PC-3 (cell line): ENCODE measurements at regions of chr4 and their contacts with region 1.

Region 1: DNA sequence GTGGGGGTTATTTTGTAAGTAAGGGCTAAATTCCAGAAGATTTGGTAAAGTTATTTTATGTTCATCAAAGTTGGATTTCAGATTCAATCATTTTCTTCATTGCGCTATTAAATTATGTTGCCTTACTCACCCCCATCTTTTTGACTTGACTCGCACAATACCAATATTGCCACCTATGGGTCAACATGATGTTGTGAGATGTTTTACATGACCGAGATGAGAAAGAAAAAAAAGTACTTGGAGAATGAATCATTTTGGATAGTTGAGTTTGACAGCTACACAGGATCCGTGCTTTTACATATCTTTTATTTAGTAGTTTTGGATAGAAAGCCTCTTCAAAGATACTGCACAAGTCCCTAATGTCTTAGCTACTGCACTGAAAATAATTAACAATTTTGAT is 224.2 kb upstream of the EMCN start:
- DNase-seq: peak; percentile 69
- ATAC-seq: no peak
- H3K4me3 ChIP-seq: no peak overlapping the region
- H3K27ac ChIP-seq: no peak overlapping the region
- H3K4me1 ChIP-seq: peaks cover 17% of the 10 kb centered on the region
- H3K27me3 ChIP-seq: no peaks in the 10 kb centered on the region
- CTCF ChIP-seq: peak; percentile 73

Region 2: DNA sequence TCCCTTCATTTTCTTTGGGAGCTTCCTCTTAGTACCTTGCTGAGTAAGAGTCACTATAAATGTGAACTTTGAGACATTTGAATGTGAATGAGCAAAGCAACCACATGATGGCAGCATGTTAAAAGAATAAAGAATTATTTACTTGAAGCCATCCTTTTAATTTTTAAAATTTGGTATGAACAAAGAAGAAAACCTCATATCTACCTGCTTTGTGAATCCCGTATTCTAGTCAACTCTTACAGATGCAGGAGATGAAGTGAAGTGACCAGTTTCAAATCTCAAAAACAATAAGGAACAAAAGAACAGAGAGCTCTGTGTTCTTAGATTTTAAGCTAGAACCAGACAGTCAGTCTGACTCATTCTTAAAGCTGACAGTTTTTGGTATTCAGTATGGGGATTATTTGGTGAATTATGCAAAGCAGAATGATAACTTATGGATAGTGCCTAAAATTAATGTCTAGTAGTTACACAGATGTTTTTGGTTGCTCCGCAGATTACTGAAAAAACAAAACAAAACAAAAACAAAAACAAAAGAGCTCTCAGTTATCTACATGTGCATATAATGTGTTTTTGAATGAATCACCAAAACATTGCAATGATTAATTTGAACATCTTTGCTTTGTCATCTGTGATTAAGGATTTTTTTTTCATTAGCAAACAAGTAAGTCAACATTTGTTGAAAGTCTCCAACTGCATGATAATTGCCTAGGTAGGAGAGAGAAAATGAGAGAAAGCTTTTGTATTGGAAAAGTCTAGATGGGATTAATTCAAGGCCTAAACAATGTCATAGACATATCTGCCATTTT is 743.8 kb before region 1 on chr4:
- CTCF ChIA-PET with region 1: interaction called, 10 read pairs
- POLR2A ChIA-PET with region 1: no interaction called
- intact Hi-C with region 1: no loop called
- DNase-seq: peak; percentile 59
- ATAC-seq: peak; percentile 80
- H3K4me3 ChIP-seq: peak overlapping the region; percentile 20; the same call in 1 of the 2 replicates
- H3K27ac ChIP-seq: peak overlapping the region; percentile 57
- H3K4me1 ChIP-seq: peaks cover 22% of the 10 kb centered on the region
- H3K27me3 ChIP-seq: no peaks in the 10 kb centered on the region
- CTCF ChIP-seq: peak; percentile 74

Region 3: GRCh38 chr4:100093091-100093866 is 648.8 kb before region 1 on chr4:
- CTCF ChIA-PET with region 1: interaction called, 4 read pairs
- POLR2A ChIA-PET with region 1: no interaction called
- intact Hi-C with region 1: loop called (anchors 1 kb)
- DNase-seq: peak; percentile 86
- ATAC-seq: peak; percentile 89
- H3K4me3 ChIP-seq: no peak overlapping the region
- H3K27ac ChIP-seq: no peak overlapping the region
- H3K4me1 ChIP-seq: peaks cover 10% of the 10 kb centered on the region
- H3K27me3 ChIP-seq: no peaks in the 10 kb centered on the region
- CTCF ChIP-seq: peak; percentile 77

Region 4: DNA sequence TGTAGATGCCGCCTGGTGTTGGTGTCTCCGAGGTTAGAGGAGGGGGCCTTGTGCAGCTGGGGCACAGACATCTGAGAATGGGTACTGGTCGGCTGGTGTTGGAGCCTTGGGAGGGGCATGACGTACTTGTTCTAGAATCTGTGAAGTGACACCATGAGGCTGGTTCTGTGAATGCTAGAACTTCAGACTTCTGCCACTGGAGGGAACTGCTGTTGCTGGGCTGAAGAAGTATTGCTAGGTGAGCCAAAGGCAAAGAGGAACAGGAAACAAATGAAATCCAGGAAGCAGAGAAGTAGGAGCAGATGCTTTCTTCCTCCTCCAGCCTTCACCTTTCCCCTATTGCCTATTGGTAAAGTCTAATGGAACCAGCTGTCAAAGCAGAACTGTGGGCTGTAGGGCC is 430.9 kb before region 1 on chr4:
- CTCF ChIA-PET with region 1: no interaction called
- POLR2A ChIA-PET with region 1: no interaction called
- intact Hi-C with region 1: loop called (anchors 5 kb)
- DNase-seq: peak; percentile 40
- ATAC-seq: peak; percentile 46; the same call in 1 of the 2 replicates
- H3K4me3 ChIP-seq: no peak overlapping the region
- H3K27ac ChIP-seq: no peak overlapping the region
- H3K4me1 ChIP-seq: no peaks in the 10 kb centered on the region
- H3K27me3 ChIP-seq: no peaks in the 10 kb centered on the region
- CTCF ChIP-seq: peak; percentile 51

Region 5: DNA sequence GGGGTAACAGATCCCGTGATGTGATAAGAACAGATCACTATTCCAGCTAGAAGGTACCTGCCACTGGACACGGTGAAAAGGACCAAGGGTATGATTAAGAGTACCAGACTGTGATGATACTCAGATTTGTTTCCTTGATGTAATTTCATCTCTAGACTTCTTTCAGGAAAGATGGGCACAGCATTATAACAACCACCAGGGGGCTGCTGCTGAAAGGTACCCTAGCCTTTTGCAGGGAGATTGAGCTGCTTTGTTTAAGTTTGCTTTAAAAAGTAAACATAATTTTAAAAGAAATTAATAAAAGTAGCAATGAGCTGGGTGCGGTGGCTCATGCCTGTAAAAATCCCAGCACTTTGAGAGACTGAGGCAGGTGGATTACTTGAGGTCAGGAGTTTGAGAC is 369.6 kb before region 1 on chr4:
- CTCF ChIA-PET with region 1: no interaction called
- POLR2A ChIA-PET with region 1: no interaction called
- intact Hi-C with region 1: loop called (anchors 5 kb)
- DNase-seq: peak; percentile 30
- ATAC-seq: no peak
- H3K4me3 ChIP-seq: no peak overlapping the region
- H3K27ac ChIP-seq: no peak overlapping the region
- H3K4me1 ChIP-seq: no peaks in the 10 kb centered on the region
- H3K27me3 ChIP-seq: no peaks in the 10 kb centered on the region
- CTCF ChIP-seq: peak; percentile 59

Region 6: DNA sequence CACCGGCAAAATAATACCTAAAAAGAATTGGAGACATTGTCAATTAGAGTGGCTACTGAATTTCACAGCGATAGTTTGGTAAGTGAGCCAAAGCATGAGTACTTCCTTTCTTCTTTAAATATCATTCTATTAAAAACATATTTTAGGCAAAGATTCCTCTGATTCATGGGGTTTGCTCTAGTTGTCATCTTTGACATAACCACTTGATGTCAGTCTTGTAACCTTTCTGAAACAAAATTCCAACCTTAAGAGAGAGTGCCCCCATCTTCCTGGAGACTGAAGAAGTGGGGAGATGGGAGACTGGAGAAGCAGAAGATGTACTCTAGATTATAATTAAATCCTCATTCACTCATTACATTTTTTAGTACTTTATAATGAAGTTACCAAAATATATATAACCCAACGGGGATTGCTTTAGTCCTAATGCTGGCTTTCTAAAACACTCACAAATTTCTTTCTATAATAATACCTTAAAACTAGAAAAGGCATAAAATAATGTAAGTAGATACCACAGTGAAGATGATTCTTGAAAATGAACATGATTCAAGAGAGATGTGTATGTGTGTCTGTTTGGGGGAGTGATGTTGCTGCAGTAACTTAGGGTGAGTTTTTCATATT is 320.6 kb before region 1 on chr4:
- CTCF ChIA-PET with region 1: no interaction called
- POLR2A ChIA-PET with region 1: no interaction called
- intact Hi-C with region 1: loop called (anchors 1 kb)
- DNase-seq: peak; percentile 43
- ATAC-seq: peak; percentile 68
- H3K4me3 ChIP-seq: peak overlapping the region; percentile 42; the same call in 1 of the 2 replicates
- H3K27ac ChIP-seq: peak overlapping the region; percentile 10; the same call in 1 of the 2 replicates
- H3K4me1 ChIP-seq: peaks cover 12% of the 10 kb centered on the region; the same call in 1 of the 2 replicates
- H3K27me3 ChIP-seq: no peaks in the 10 kb centered on the region
- CTCF ChIP-seq: peak; percentile 71

Region 7: DNA sequence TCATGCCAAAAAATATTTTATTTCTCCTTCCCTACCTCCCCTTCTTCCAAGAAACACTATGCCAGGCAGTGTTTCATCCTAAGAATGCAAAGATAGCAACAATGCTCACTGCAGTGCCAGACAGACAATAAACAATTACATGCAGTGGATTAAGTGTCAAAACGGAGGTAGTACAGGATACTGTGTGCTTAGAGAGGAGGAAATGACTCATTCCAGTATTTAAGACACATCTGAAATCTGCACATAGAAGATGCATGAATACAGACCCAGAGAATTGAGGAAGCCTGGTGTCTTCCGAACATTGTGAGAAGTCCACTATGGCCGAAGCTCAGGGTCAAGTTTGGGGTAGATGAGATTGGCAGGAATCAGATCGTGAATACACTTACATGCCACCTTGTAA is 278.9 kb after region 1 on chr4:
- CTCF ChIA-PET with region 1: no interaction called
- POLR2A ChIA-PET with region 1: no interaction called
- intact Hi-C with region 1: loop called (anchors 2 kb)
- DNase-seq: peak; percentile 69
- ATAC-seq: peak; percentile 87
- H3K4me3 ChIP-seq: no peak overlapping the region
- H3K27ac ChIP-seq: peak overlapping the region; percentile 83
- H3K4me1 ChIP-seq: peaks cover 29% of the 10 kb centered on the region
- H3K27me3 ChIP-seq: no peaks in the 10 kb centered on the region
- CTCF ChIP-seq: no peak